OCI-LY7 (cell line): ENCODE measurements at regions of chr22 and their contacts with region 1.

Region 1: GRCh38 chr22:40764763-40765441 is 54.2 kb downstream of the SLC25A17 start:
- DNase-seq: peak; percentile 24
- H3K4me3 ChIP-seq: no peak overlapping the region
- H3K27ac ChIP-seq: peak overlapping the region; percentile 31
- H3K4me1 ChIP-seq: peaks cover 13% of the 10 kb centered on the region
- CTCF ChIP-seq: no peak

Region 2: DNA sequence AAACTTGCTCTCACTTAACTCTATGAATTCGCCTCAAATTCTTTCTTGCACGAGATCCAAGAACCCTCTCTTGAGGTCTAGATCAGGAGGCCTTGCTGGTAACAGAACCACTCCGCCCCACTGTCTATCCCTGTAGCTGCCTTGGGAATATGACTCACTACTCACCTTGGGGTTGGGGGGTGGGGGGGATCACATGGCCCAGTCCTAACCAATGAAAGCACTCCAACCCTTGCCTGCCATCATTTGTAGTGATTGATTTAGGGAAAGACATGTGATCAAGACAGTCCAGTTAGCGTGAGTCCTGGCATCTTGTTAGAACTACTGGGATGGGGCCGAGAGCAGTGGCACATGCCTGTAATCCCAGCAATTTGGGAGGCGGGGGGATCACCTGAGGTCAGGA is 123.6 kb before region 1 on chr22:
- CTCF ChIA-PET with region 1: no interaction called
- POLR2A ChIA-PET with region 1: no interaction called
- intact Hi-C with region 1: no loop called
- DNase-seq: no peak
- H3K4me3 ChIP-seq: no peak overlapping the region
- H3K27ac ChIP-seq: no peak overlapping the region
- H3K4me1 ChIP-seq: peaks cover 19% of the 10 kb centered on the region
- CTCF ChIP-seq: no peak

Region 3: GRCh38 chr22:40679964-40680818 is 84.7 kb before region 1 on chr22:
- CTCF ChIA-PET with region 1: interaction called, 5 read pairs
- POLR2A ChIA-PET with region 1: no interaction called
- intact Hi-C with region 1: loop called (anchors 1 kb)
- DNase-seq: no peak
- H3K4me3 ChIP-seq: no peak overlapping the region
- H3K27ac ChIP-seq: no peak overlapping the region
- H3K4me1 ChIP-seq: peaks cover 22% of the 10 kb centered on the region
- CTCF ChIP-seq: no peak

Region 4: GRCh38 chr22:40721266-40721665 is 43.6 kb before region 1 on chr22:
- CTCF ChIA-PET with region 1: no interaction called
- POLR2A ChIA-PET with region 1: no interaction called
- intact Hi-C with region 1: no loop called
- DNase-seq: no peak
- H3K4me3 ChIP-seq: no peak overlapping the region
- H3K27ac ChIP-seq: no peak overlapping the region
- H3K4me1 ChIP-seq: no peaks in the 10 kb centered on the region
- CTCF ChIP-seq: no peak

Region 5: DNA sequence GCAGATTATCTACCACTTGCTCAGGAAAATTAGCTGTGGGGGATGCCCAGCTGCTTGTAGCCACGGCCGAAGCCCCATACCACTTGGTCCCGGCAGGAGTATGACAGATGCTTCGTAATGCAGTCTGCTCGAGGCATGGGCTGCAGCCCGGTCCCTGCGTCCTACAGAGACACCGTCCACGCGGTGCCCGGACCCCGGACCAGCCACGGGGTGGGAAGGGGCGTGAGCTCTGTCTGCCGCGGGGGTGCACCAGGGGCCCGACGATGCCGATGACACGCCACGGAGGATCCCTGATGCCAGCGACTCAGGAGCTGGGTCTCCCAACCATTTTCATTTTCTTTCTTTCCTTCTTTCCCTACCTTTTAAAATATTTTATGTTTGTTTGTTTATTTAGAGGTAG is 24.2 kb after region 1 on chr22:
- CTCF ChIA-PET with region 1: no interaction called
- POLR2A ChIA-PET with region 1: no interaction called
- intact Hi-C with region 1: no loop called
- DNase-seq: no peak
- H3K4me3 ChIP-seq: no peak overlapping the region
- H3K27ac ChIP-seq: no peak overlapping the region
- H3K4me1 ChIP-seq: no peaks in the 10 kb centered on the region
- CTCF ChIP-seq: no peak